ENCODE measurements at regions of chr3 and their contacts with region 1.

Region 1: GRCh38 chr3:140699516-140700231 is 21.8 kb downstream of the TRIM42 start:
- DNase-seq: peak; percentile 98
- ATAC-seq: peak; percentile 99
- H3K4me3 ChIP-seq: no peak overlapping the region; a peak in 1 of 6 replicates
- H3K27ac ChIP-seq: peak overlapping the region; percentile 72
- H3K4me1 ChIP-seq: peaks cover 55% of the 10 kb centered on the region
- H3K27me3 ChIP-seq: no peaks in the 10 kb centered on the region
- CTCF ChIP-seq: no peak
- EP300 ChIP-seq: peak; percentile 98 to 99
- POLR2A ChIP-seq: no peak
- RAD21 ChIP-seq: peak; percentile 21; the same call in 1 of the 2 replicates

Region 2: DNA sequence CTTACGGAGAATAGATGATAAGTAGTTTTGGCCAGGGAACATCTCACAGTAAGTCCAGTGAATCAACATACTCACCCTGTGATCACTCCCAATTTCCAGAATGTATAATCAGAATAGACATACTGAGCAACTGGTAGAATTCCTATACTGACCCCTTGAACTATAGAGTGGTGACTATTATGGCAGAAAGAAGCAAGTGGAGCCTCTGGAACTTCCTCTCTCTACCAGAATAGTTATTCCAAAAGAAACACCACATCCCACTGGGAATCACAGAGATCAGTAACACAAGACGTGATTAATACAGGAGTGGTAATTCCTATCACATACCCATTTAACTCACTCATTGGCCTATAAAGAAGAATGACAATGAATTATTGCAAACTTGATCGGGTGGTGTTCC is 71.9 kb before region 1 on chr3:
- CTCF ChIA-PET with region 1: no interaction called
- POLR2A ChIA-PET with region 1: no interaction called
- in situ Hi-C with region 1: no loop called
- intact Hi-C with region 1: no loop called
- DNase-seq: no peak
- ATAC-seq: no peak
- H3K4me3 ChIP-seq: no peak overlapping the region
- H3K27ac ChIP-seq: no peak overlapping the region
- H3K4me1 ChIP-seq: no peaks in the 10 kb centered on the region
- H3K27me3 ChIP-seq: no peaks in the 10 kb centered on the region
- CTCF ChIP-seq: no peak
- EP300 ChIP-seq: no peak
- POLR2A ChIP-seq: no peak
- RAD21 ChIP-seq: no peak

Region 3: GRCh38 chr3:140724856-140725812 is 25.5 kb after region 1 on chr3:
- CTCF ChIA-PET with region 1: no interaction called
- POLR2A ChIA-PET with region 1: interaction called, 76 read pairs
- in situ Hi-C with region 1: no loop called
- intact Hi-C with region 1: loop called (anchors 1 kb)
- DNase-seq: no peak
- ATAC-seq: no peak
- H3K4me3 ChIP-seq: no peak overlapping the region
- H3K27ac ChIP-seq: no peak overlapping the region
- H3K4me1 ChIP-seq: peaks cover 65% of the 10 kb centered on the region
- H3K27me3 ChIP-seq: no peaks in the 10 kb centered on the region
- CTCF ChIP-seq: no peak
- EP300 ChIP-seq: no peak
- POLR2A ChIP-seq: no peak
- RAD21 ChIP-seq: no peak